Upper lobe of right lung (tissue), 1 donor: ENCODE measurements at regions of chr16 and their contacts with region 1.

Region 1: DNA sequence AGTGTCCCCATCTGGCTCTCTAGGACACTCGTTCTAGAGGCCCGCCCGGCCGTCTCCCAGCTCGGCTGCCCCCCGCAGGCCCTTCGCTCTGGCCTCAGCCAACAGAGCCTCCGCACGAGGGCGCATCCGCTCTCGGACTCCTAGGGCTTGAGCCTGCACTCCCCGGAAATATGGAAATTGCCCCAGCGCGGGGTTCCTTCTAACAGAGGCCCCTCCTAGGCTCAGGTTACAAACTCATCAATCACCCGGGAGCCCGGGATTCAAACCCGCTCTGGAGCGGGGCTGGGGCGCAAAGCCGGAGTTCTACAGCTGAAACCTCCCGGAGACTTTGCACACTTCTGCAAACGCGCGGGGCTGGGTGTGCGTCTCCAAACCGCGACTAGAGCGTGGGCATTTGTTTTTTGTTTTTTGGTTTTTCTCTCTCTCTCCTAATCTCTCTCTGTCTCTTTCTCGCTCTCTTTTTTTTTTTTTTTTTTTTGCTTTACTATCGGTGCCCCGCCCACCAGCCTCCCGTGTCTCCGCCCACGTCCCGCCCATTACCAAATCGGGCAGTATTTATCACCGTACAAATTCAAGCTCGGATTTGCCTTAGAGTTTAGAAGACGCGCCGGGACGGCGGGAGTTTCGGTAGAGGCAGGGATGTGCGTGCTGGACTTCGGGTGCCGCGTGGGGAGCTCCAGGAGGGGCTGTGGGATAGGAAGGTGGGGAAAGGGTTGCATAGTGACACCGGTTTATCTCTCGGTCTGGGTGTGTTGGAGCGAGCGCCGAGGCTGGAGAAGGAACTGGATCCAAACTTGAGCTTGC is 2.4 kb upstream of the FOXL1 start:
- DNase-seq: no peak
- ATAC-seq: peak; percentile 45
- H3K4me3 ChIP-seq: peak overlapping the region; percentile 39
- H3K27ac ChIP-seq: no peak overlapping the region
- H3K4me1 ChIP-seq: peaks cover 11% of the 10 kb centered on the region
- H3K27me3 ChIP-seq: peaks cover 99% of the 10 kb centered on the region
- CTCF ChIP-seq: peak; percentile 42

Region 2: GRCh38 chr16:86761111-86762031 is 185.4 kb after region 1 on chr16:
- intact Hi-C with region 1: loop called (anchors 10 kb)
- DNase-seq: no peak
- ATAC-seq: peak; percentile 68
- H3K4me3 ChIP-seq: no peak overlapping the region
- H3K27ac ChIP-seq: no peak overlapping the region
- H3K4me1 ChIP-seq: no peaks in the 10 kb centered on the region
- H3K27me3 ChIP-seq: peaks cover 41% of the 10 kb centered on the region
- CTCF ChIP-seq: peak; percentile 80